Activated CD4-positive, alpha-beta T cell treated with anti-CD3 and anti-CD28 coated beads for 36 hours (primary cell): ENCODE measurements at regions of chr15 and their contacts with region 1.

Region 1: GRCh38 chr15:22895469-22896190 is 57.2 kb downstream of the NIPA2 start:
- DNase-seq: peak; percentile 68
- ATAC-seq: peak; percentile 96
- H3K4me3 Mint-ChIP-seq: no peak overlapping the region
- H3K27ac Mint-ChIP-seq: no peak overlapping the region
- H3K4me1 Mint-ChIP-seq: peaks cover 9% of the 10 kb centered on the region
- H3K27me3 Mint-ChIP-seq: no peaks in the 10 kb centered on the region

Region 2: GRCh38 chr15:22861161-22861560 is 34.5 kb before region 1 on chr15:
- CTCF ChIA-PET with region 1: no interaction called
- POLR2A ChIA-PET with region 1: no interaction called
- intact Hi-C with region 1: loop called in 1 of 2 experiments (anchors 5 kb)
- DNase-seq: no peak
- ATAC-seq: no peak
- H3K4me3 Mint-ChIP-seq: no peak overlapping the region
- H3K27ac Mint-ChIP-seq: no peak overlapping the region
- H3K4me1 Mint-ChIP-seq: peaks cover 2% of the 10 kb centered on the region
- H3K27me3 Mint-ChIP-seq: no peaks in the 10 kb centered on the region

Region 3: DNA sequence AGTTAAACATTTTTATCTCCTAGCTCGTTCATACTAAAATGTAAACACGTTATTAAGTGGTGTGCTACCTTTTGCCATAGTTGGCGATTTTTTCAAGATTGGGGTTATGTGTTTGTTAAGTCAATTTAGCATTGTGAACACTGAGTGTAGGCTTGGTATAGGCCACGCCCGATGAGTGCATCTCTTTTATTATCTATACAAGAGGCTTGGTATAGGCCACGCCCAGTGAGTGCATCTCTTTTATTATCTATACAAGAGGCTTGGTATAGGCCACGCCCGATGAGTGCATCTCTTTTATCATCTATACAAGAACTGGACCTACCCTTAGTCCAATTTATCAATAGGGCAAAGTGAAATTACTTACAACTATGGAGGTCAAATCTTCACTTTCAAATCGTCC is 13.2 kb after region 1 on chr15:
- CTCF ChIA-PET with region 1: no interaction called
- POLR2A ChIA-PET with region 1: no interaction called
- intact Hi-C with region 1: no loop called
- DNase-seq: no peak
- ATAC-seq: no peak
- H3K4me3 Mint-ChIP-seq: no peak overlapping the region
- H3K27ac Mint-ChIP-seq: no peak overlapping the region
- H3K4me1 Mint-ChIP-seq: no peaks in the 10 kb centered on the region
- H3K27me3 Mint-ChIP-seq: no peaks in the 10 kb centered on the region